ENCODE measurements at regions of chr15 and their contacts with region 1.

Region 1: GRCh38 chr15:88664151-88664778 is 25.4 kb downstream of the ISG20 start:
- DNase-seq: peak; percentile 63 to 68 (median 66)
- H3K4me3 ChIP-seq: no peak overlapping the region
- H3K4me3 Mint-ChIP-seq: no peak overlapping the region
- H3K27ac ChIP-seq: no peak overlapping the region
- H3K27ac Mint-ChIP-seq: peak overlapping the region; percentile 22 to 84 (median 64)
- H3K4me1 ChIP-seq: peaks cover 17% of the 10 kb centered on the region
- H3K4me1 Mint-ChIP-seq: peaks cover 16 to 36% (median 24%) of the 10 kb centered on the region in 4 donors
- H3K27me3 ChIP-seq: no peaks in the 10 kb centered on the region
- H3K27me3 Mint-ChIP-seq: peaks cover 6 to 9% of the 10 kb centered on the region in 2 donors

Region 2: GRCh38 chr15:88476635-88477060 is 187.6 kb before region 1 on chr15:
- CTCF ChIA-PET with region 1: interaction called, 7 read pairs
- POLR2A ChIA-PET with region 1: interaction called, 3 read pairs
- intact Hi-C with region 1: loop called (anchors 1 kb)
- DNase-seq: peak in 4 of 5 donors; percentile 17 to 28 (median 26)
- H3K4me3 ChIP-seq: no peak overlapping the region
- H3K4me3 Mint-ChIP-seq: no peak overlapping the region
- H3K27ac ChIP-seq: no peak overlapping the region
- H3K27ac Mint-ChIP-seq: peak overlapping the region in 2 of 7 donors; percentile 35 to 42
- H3K4me1 ChIP-seq: no peaks in the 10 kb centered on the region
- H3K4me1 Mint-ChIP-seq: peaks cover 0 to 2% (median 1%) of the 10 kb centered on the region in 4 donors
- H3K27me3 ChIP-seq: no peaks in the 10 kb centered on the region
- H3K27me3 Mint-ChIP-seq: no peaks in the 10 kb centered on the region

Region 3: GRCh38 chr15:88529021-88529630 is 135.1 kb before region 1 on chr15:
- CTCF ChIA-PET with region 1: no interaction called
- POLR2A ChIA-PET with region 1: no interaction called
- intact Hi-C with region 1: no loop called
- DNase-seq: no peak
- H3K4me3 ChIP-seq: no peak overlapping the region
- H3K4me3 Mint-ChIP-seq: no peak overlapping the region
- H3K27ac ChIP-seq: no peak overlapping the region
- H3K27ac Mint-ChIP-seq: no peak overlapping the region
- H3K4me1 ChIP-seq: no peaks in the 10 kb centered on the region
- H3K4me1 Mint-ChIP-seq: peaks cover 0 to 7% (median under 1%) of the 10 kb centered on the region in 4 donors
- H3K27me3 ChIP-seq: no peaks in the 10 kb centered on the region
- H3K27me3 Mint-ChIP-seq: no peaks in the 10 kb centered on the region

Region 4: GRCh38 chr15:88615303-88616107 is 48.8 kb before region 1 on chr15:
- CTCF ChIA-PET with region 1: no interaction called
- POLR2A ChIA-PET with region 1: no interaction called
- intact Hi-C with region 1: no loop called
- DNase-seq: no peak
- H3K4me3 ChIP-seq: no peak overlapping the region
- H3K4me3 Mint-ChIP-seq: no peak overlapping the region
- H3K27ac ChIP-seq: no peak overlapping the region
- H3K27ac Mint-ChIP-seq: no peak overlapping the region
- H3K4me1 ChIP-seq: peaks cover under 1% of the 10 kb centered on the region
- H3K4me1 Mint-ChIP-seq: peaks cover 0 to under 1% (median under 1%) of the 10 kb centered on the region in 4 donors
- H3K27me3 ChIP-seq: no peaks in the 10 kb centered on the region
- H3K27me3 Mint-ChIP-seq: peaks cover 0 to 13% of the 10 kb centered on the region in 2 donors

Region 5: DNA sequence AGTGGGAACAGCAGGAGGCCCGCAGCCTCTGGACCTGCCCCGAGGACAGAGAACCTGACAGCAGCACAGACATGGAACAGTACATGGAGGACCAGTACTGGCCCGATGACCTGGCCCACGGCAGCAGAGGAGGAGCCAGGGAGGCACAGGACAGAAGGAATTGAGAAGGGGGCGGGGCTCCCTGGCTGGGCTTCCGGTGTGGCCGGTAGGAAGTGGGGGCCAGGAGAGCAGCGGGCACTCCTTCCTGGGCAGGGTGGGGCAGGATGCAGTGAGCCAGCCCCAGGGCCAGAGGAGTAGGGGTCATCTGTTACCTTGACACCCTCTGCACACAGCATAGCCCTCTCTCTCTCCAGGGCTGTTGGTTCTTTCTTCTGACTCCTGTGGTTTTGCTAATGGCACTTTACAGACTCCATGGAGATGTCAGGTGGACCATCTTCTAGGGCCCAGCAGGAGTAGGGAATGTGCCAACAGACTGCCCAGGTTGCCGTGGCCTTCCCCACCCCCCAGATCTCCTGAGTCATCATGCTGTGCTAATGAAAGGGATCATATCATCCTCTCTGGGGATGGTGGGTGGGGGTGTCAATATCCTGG is 34.0 kb before region 1 on chr15:
- CTCF ChIA-PET with region 1: interaction called, 132 read pairs
- POLR2A ChIA-PET with region 1: interaction called, 113 read pairs
- intact Hi-C with region 1: no loop called
- DNase-seq: no peak
- H3K4me3 ChIP-seq: peak overlapping the region in 1 of 2 donors; percentile 8
- H3K4me3 Mint-ChIP-seq: peak overlapping the region; percentile 66 to 88 (median 76)
- H3K27ac ChIP-seq: peak overlapping the region; percentile 52
- H3K27ac Mint-ChIP-seq: peak overlapping the region; percentile 81 to 99 (median 91)
- H3K4me1 ChIP-seq: peaks cover 99% of the 10 kb centered on the region
- H3K4me1 Mint-ChIP-seq: peaks cover 48 to 99% (median 81%) of the 10 kb centered on the region in 4 donors
- H3K27me3 ChIP-seq: no peaks in the 10 kb centered on the region
- H3K27me3 Mint-ChIP-seq: no peaks in the 10 kb centered on the region

Region 6: DNA sequence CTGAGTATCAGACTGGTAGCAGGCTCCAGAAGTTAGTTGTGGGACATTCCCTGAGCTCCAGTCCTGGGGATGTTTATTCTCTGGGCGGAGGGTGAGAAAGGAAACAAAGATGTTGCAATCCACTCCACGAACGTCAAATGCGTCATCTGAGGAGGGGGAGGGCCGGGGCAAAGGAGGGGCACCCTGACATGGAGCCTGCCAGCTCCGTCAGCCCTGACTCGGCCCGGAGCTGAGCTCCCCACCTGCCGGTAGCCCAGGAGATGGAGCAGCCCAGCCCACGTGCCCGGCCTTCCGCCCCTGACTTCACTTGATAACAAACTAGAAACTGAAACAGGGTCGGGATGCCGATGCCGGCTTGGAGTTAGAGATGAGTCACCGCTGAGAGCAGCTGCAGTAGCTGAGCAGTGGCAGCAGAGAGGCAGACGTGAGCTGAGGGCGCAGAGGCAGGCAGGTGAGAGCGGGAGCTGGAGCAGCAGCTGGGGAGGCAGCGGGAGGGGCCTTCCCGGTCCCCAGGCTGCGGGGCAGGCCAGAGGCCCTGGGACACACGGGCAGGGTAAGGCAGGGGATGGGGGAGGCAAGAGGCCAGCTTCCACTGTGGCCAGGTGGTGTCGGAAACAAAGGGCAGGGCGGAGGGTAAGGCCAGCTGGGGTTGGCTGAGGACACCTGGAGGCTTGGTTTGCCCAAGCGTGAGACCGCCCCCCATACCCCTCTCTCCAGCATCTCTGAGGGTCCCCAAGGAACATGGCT is 25.5 kb before region 1 on chr15 and contains the start of gene ISG20:
- CTCF ChIA-PET with region 1: interaction called, 19 read pairs
- POLR2A ChIA-PET with region 1: interaction called, 17 read pairs
- intact Hi-C with region 1: loop called (anchors 1 kb)
- DNase-seq: peak; percentile 97 to 100 (median 99)
- H3K4me3 ChIP-seq: peak within 1 kb of the TSS; percentile 55 to 94
- H3K4me3 Mint-ChIP-seq: peak within 1 kb of the TSS; percentile 88 to 98 (median 95)
- H3K27ac ChIP-seq: peak within 1 kb of the TSS; percentile 100
- H3K27ac Mint-ChIP-seq: peak within 1 kb of the TSS; percentile 89 to 100 (median 99)
- H3K4me1 ChIP-seq: peaks cover 96% of the 10 kb centered on the region
- H3K4me1 Mint-ChIP-seq: peaks cover 55 to 86% (median 74%) of the 10 kb centered on the region in 4 donors
- H3K27me3 ChIP-seq: no peaks in the 10 kb centered on the region
- H3K27me3 Mint-ChIP-seq: no peaks in the 10 kb centered on the region
- total RNA-seq, gene ISG20: 144 to 153 TPM

Region 7: DNA sequence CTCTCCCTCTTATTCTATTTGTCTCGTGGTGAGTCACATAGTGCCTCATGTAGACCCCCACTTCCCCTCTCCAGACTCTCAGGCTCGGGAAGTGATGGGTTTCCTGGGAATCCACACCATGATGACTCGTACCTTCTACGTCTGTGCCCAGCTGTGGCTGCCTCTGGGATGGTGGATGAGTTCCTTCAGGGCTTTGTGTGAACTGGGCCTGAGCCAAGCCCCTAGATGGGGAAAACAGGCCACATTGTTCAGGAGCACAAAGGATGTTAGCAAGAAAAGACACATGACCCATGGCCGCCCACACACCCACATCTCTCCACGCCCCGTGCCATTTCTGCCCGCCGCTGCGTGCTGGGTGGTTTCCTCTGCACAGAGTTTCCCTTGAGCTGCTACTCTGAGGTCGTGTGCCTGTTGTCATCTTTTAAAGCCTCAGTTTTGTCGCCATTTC is 15.0 kb before region 1 on chr15:
- CTCF ChIA-PET with region 1: interaction called, 14 read pairs
- POLR2A ChIA-PET with region 1: interaction called, 12 read pairs
- intact Hi-C with region 1: no loop called
- DNase-seq: peak; percentile 62 to 76 (median 68)
- H3K4me3 ChIP-seq: peak overlapping the region in 1 of 2 donors; percentile 1
- H3K4me3 Mint-ChIP-seq: peak overlapping the region; percentile 22 to 89 (median 78)
- H3K27ac ChIP-seq: peak overlapping the region; percentile 78
- H3K27ac Mint-ChIP-seq: peak overlapping the region; percentile 94 to 98 (median 95)
- H3K4me1 ChIP-seq: peaks cover 96% of the 10 kb centered on the region
- H3K4me1 Mint-ChIP-seq: peaks cover 65 to 94% (median 79%) of the 10 kb centered on the region in 4 donors
- H3K27me3 ChIP-seq: no peaks in the 10 kb centered on the region
- H3K27me3 Mint-ChIP-seq: no peaks in the 10 kb centered on the region

Region 8: DNA sequence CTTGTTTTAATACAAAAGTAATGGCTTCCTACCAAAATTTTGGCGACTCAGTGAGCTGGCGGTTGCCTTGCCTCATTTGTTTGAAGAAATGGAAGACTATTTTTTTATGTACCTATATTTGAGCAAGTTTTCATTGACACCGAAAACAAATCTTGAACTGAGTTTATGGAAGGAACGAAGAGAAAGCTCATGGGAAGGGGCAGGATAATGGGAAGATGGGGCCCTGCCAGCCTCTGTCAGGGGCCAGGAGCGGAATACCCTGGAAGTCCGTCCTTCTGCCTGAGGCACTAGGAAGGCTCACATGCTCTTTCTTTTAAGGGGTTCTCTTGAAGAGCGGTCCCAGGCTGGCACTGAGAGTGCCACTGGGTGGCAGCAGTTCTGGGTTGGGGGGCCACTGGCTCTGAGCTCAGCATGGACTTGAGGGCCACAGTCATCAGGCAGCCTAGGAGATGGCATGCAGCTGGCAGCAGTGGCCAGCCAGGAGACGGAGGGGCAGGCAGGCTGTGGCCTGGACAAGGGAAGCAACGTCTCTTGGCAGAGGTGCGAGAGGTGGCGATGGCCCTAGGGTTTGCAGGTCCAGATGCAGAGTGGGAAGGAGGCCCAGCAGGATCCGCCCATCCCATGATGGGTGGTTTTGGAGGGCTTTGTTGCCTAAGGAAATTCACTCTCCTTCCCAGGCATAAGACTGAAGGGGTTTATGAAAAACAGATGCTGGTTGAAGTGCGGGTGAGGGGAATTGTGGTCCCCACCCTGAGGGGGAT is 16.2 kb after region 1 on chr15:
- CTCF ChIA-PET with region 1: no interaction called
- POLR2A ChIA-PET with region 1: no interaction called
- intact Hi-C with region 1: no loop called
- DNase-seq: no peak
- H3K4me3 ChIP-seq: no peak overlapping the region
- H3K4me3 Mint-ChIP-seq: no peak overlapping the region
- H3K27ac ChIP-seq: no peak overlapping the region
- H3K27ac Mint-ChIP-seq: no peak overlapping the region
- H3K4me1 ChIP-seq: no peaks in the 10 kb centered on the region
- H3K4me1 Mint-ChIP-seq: no peaks in the 10 kb centered on the region
- H3K27me3 ChIP-seq: no peaks in the 10 kb centered on the region
- H3K27me3 Mint-ChIP-seq: peaks cover 2 to 4% of the 10 kb centered on the region in 2 donors